K562 (cell line): ENCODE measurements at regions of chr1 and their contacts with region 1.

Region 1: DNA sequence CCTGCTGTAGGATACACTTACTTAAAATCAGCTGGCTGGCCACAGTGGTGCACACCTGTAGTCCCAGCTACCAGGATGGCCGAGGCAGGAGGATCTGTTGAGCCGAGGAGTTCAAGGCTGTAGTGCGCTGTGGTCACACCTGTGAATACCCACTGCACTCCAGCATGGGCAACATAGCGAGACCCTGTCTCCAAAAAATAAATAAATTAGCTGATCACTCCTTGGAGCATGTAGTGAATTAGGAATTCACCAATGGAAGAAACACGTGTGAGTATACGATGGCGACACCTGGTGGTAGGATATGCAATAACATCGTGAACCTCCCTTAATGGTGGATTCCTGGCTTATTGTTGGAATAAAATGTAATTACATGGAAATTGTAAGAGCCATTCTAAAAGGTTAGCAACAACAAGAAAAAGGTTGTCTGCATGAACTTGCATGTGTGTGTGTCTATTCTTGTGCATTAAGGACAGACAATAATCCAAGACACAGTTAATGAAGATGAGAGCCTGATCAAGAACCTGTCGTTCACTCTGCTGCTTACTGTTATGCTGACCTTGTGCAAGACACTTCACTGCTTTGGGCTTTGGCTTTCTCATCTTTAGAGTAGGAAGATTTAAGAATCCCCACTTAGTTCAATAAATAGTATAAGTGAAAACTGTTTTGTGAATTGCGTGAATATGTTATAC is 38.6 kb upstream of the COX20 start:
- DNase-seq: peak; percentile 62 to 80 (median 64)
- ATAC-seq: peak; percentile 77
- H3K4me3 ChIP-seq: no peak overlapping the region
- H3K27ac ChIP-seq: no peak overlapping the region
- H3K4me1 ChIP-seq: no peaks in the 10 kb centered on the region; a peak in 2 of 5 replicates
- H3K27me3 ChIP-seq: peaks cover 16 to 47% of the 10 kb centered on the region in 2 experiments
- CTCF ChIP-seq: peak; percentile 71 to 95 (median 91)
- EP300 ChIP-seq: no peak
- POLR2A ChIP-seq: no peak
- RAD21 ChIP-seq: peak; percentile 83 to 96

Region 2: DNA sequence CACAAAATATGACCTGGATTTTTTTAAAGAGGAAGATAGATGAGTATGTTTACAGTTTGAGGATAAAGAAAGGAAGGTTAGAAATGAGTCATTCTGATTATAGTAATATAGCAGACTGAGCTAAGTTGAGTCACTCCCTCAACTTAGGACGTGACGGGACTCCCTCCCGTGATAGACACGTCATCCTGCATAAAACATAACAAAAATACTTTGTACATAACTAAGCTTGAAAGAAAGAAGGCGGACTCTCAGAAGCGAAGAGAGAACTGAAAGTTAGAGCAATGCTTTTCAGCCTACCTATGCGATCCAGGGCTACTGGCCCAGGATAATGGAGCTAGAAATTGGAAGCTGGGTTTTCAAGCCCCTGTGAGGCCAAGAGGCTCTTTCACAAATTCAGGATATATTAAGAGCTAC is 196.9 kb before region 1 on chr1:
- CTCF ChIA-PET with region 1: interaction called, 23 read pairs
- POLR2A ChIA-PET with region 1: interaction called, 3 read pairs
- in situ Hi-C with region 1: loop called (anchors 5 kb)
- intact Hi-C with region 1: loop called (anchors 1 kb)
- DNase-seq: peak; percentile 22 to 50 (median 26)
- ATAC-seq: peak; percentile 33
- H3K4me3 ChIP-seq: no peak overlapping the region
- H3K27ac ChIP-seq: no peak overlapping the region
- H3K4me1 ChIP-seq: no peaks in the 10 kb centered on the region; a peak in 2 of 5 replicates
- H3K27me3 ChIP-seq: peaks cover 23 to 37% of the 10 kb centered on the region in 2 experiments
- CTCF ChIP-seq: no peak
- EP300 ChIP-seq: peak; percentile 23; the same call in 1 of the 2 replicates
- POLR2A ChIP-seq: no peak
- RAD21 ChIP-seq: no peak

Region 3: DNA sequence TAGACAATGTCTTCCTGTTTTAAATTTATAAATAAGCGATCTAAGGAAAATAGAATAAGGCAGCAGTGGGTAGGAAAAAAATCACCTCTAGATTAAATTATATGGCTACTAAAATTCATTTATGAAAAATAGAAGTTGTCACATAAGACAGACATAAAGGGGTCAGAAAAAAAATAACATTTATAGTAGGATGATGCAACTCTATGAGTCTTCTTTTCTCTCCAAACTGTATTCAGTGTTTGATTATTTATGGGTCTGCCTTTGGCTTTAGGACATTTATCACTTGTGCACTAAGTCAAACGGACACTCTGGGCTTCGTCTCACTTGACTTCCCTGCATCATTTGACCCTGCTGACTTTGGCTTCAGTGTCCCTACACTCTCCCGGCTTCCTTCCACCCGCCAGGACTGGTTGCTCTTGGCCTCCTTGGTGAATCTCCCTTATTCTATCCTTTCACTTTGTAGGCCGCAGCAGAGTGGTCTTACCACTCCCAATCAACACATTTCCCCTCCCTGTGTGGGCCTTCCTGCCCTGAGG is 191.0 kb before region 1 on chr1:
- CTCF ChIA-PET with region 1: interaction called, 23 read pairs
- POLR2A ChIA-PET with region 1: interaction called, 3 read pairs
- in situ Hi-C with region 1: loop called (anchors 5 kb)
- intact Hi-C with region 1: loop called (anchors 1 kb)
- DNase-seq: no peak
- ATAC-seq: no peak
- H3K4me3 ChIP-seq: no peak overlapping the region
- H3K27ac ChIP-seq: no peak overlapping the region
- H3K4me1 ChIP-seq: no peaks in the 10 kb centered on the region
- H3K27me3 ChIP-seq: peaks cover 27 to 54% of the 10 kb centered on the region in 2 experiments
- CTCF ChIP-seq: no peak
- EP300 ChIP-seq: no peak
- POLR2A ChIP-seq: no peak
- RAD21 ChIP-seq: no peak

Region 4: GRCh38 chr1:244652699-244653466 is 144.0 kb before region 1 on chr1 and contains the start of gene DESI2:
- CTCF ChIA-PET with region 1: no interaction called
- POLR2A ChIA-PET with region 1: no interaction called
- in situ Hi-C with region 1: no loop called
- intact Hi-C with region 1: loop called (anchors 5 kb)
- DNase-seq: peak; percentile 98 to 99 (median 98)
- ATAC-seq: peak; percentile 95
- H3K4me3 ChIP-seq: peak within 1 kb of the TSS; percentile 76
- H3K27ac ChIP-seq: peak within 1 kb of the TSS; percentile 77
- H3K4me1 ChIP-seq: peaks cover 11 to 25% of the 10 kb centered on the region in 2 experiments
- H3K27me3 ChIP-seq: no peaks in the 10 kb centered on the region
- CTCF ChIP-seq: peak; percentile 54 to 60 (median 60)
- EP300 ChIP-seq: no peak; the same call in 1 of the 2 replicates
- POLR2A ChIP-seq: peak; percentile 86
- RAD21 ChIP-seq: peak; percentile 46 to 55
- polyA plus RNA-seq, gene DESI2: 17.4 to 20.4 TPM

Region 5: GRCh38 chr1:244835276-244836134 is 38.6 kb after region 1 on chr1 and contains the start of gene COX20:
- CTCF ChIA-PET with region 1: no interaction called
- POLR2A ChIA-PET with region 1: no interaction called
- in situ Hi-C with region 1: no loop called
- intact Hi-C with region 1: loop called (anchors 1 kb)
- DNase-seq: peak; percentile 94 to 98 (median 95)
- ATAC-seq: peak; percentile 79
- H3K4me3 ChIP-seq: peak within 1 kb of the TSS; percentile 74
- H3K27ac ChIP-seq: peak within 1 kb of the TSS; percentile 98
- H3K4me1 ChIP-seq: peaks cover 14 to 15% of the 10 kb centered on the region in 2 experiments; a peak in 4 of 5 replicates
- H3K27me3 ChIP-seq: no peaks in the 10 kb centered on the region
- CTCF ChIP-seq: no peak
- EP300 ChIP-seq: 0 out of 2 replicates have a peak, but pooled peaks have one; percentile 40
- POLR2A ChIP-seq: peak; percentile 97
- RAD21 ChIP-seq: no peak
- polyA plus RNA-seq, gene COX20: 145 to 171 TPM

Region 6: GRCh38 chr1:245051349-245052221 is 254.7 kb after region 1 on chr1:
- CTCF ChIA-PET with region 1: no interaction called
- POLR2A ChIA-PET with region 1: no interaction called
- in situ Hi-C with region 1: no loop called
- intact Hi-C with region 1: no loop called
- DNase-seq: peak; percentile 73 to 93 (median 84)
- ATAC-seq: peak; percentile 96
- H3K4me3 ChIP-seq: no peak overlapping the region
- H3K27ac ChIP-seq: peak overlapping the region; percentile 73
- H3K4me1 ChIP-seq: peaks cover 15 to 26% of the 10 kb centered on the region in 2 experiments
- H3K27me3 ChIP-seq: no peaks in the 10 kb centered on the region
- CTCF ChIP-seq: no peak
- EP300 ChIP-seq: peak; percentile 87
- POLR2A ChIP-seq: 0 out of 2 replicates have a peak, but pooled peaks have one; percentile 42
- RAD21 ChIP-seq: peak in 1 of 2 experiments; percentile 8; a peak in 1 of 4 replicates